ENCODE measurements at regions of chr4 and their contacts with region 1.

Region 1: GRCh38 chr4:186587416-186588018 is 32.1 kb upstream of the MTNR1A start:
- DNase-seq: peak; percentile 36
- H3K4me3 ChIP-seq: no peak overlapping the region
- H3K27ac ChIP-seq: no peak overlapping the region
- H3K27me3 ChIP-seq: no peaks in the 10 kb centered on the region
- CTCF ChIP-seq: peak; percentile 85

Region 2: GRCh38 chr4:186472948-186473347 is 114.6 kb before region 1 on chr4:
- CTCF ChIA-PET with region 1: interaction called, 53 read pairs
- POLR2A ChIA-PET with region 1: no interaction called
- DNase-seq: peak; percentile 6
- H3K4me3 ChIP-seq: no peak overlapping the region
- H3K27ac ChIP-seq: no peak overlapping the region
- H3K27me3 ChIP-seq: no peaks in the 10 kb centered on the region
- CTCF ChIP-seq: peak; percentile 62

Region 3: GRCh38 chr4:186514271-186514950 is 73.1 kb before region 1 on chr4:
- CTCF ChIA-PET with region 1: no interaction called
- POLR2A ChIA-PET with region 1: no interaction called
- DNase-seq: no peak
- H3K4me3 ChIP-seq: no peak overlapping the region
- H3K27ac ChIP-seq: no peak overlapping the region
- H3K27me3 ChIP-seq: no peaks in the 10 kb centered on the region
- CTCF ChIP-seq: no peak

Region 4: DNA sequence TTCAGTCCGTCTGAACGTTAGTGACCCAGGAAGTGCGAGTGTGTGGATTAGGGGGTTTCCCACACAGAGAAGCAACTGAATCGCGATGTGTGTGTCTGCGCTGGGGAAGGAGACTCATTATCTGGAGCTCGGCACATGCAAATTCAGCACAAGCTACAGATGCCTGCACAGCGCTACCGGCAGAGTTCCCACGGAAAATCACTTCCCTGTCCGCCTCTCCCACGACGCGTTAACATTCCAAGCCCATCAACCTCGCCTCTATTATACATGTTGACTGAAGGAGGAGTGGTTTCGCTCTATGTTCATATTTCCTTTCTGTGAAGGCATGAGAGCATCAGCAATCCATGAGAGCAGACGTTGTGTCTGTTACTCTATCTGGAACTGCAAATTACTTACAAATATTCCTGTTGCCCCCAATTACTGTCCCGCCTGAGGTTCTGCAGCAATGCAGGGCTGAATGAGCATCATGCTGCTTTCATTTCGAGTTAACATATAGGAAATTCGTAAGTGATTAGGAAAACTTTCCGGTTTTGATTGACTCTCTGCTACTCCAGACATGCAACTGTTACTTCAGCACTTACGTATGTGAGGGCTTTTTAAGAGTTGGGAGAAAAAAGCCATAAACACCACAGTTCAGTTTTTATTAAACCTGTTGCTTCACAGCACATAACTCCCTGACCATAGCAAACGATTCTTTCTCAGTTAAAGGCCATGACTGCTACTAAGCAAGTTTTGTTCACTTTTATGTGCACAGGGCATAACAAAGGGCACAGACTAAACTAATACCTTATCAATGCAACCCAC is 17.1 kb before region 1 on chr4:
- CTCF ChIA-PET with region 1: interaction called, 107 read pairs
- POLR2A ChIA-PET with region 1: no interaction called
- DNase-seq: peak; percentile 36
- H3K4me3 ChIP-seq: peak overlapping the region; percentile 28
- H3K27ac ChIP-seq: peak overlapping the region; percentile 39
- H3K27me3 ChIP-seq: no peaks in the 10 kb centered on the region
- CTCF ChIP-seq: no peak

Region 5: DNA sequence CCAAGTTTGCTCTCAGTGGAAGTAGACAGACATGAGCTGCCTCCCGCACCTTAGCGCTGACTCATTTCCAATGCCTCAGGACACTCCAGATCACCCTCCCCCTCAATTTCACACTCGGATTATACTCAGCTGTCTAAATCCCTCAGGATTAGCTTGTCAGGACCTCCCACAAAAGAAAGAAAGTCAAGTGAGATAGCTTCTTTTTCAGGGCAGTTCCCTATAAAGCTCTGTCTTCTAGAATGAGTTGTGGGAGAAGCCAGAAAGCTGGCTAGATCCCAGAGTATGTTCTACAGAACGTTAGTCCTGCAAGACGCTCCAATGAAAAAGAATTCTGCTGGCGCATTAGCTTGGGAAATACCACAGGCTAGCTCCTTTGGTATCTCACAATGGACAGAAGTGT is 19.1 kb after region 1 on chr4:
- CTCF ChIA-PET with region 1: interaction called, 23 read pairs
- POLR2A ChIA-PET with region 1: no interaction called
- DNase-seq: no peak
- H3K4me3 ChIP-seq: no peak overlapping the region
- H3K27ac ChIP-seq: no peak overlapping the region
- H3K27me3 ChIP-seq: no peaks in the 10 kb centered on the region
- CTCF ChIP-seq: no peak

Measured in AG04450 (cell line).